ENCODE measurements at regions of chr15 and their contacts with region 1.

Region 1: DNA sequence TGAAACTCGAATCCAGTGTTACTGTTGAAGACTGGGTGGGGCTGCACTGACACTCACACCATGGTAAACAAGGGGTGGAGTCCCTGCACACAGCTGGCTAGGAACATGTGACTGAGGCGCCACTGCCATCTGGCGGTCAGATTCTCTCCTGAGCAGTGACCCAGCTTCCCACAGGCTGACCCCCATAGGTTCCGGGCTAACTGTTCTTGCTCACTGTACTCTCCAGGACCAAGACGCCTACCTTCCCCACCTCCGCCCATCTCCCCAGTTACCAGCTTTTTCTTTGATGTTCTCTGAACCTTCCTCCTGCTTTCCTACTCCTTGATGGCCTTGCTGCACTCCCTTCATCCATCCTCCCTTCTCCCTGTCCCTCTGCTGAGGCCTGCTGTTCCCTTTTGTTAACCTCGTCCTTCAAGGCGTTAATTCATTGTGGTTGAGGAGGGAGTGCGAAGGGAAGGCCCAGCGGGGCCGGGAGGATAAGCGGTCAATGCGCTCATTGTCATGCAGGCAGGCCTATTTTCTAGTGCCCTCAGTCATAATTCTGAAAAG is 115.2 kb downstream of the ATP8B4 start:
- DNase-seq: peak; percentile 37
- ATAC-seq: peak; percentile 100
- H3K4me3 ChIP-seq: no peak overlapping the region
- H3K27ac ChIP-seq: no peak overlapping the region
- H3K4me1 ChIP-seq: no peaks in the 10 kb centered on the region
- H3K27me3 ChIP-seq: no peaks in the 10 kb centered on the region; a peak in 2 of 4 replicates
- CTCF ChIP-seq: peak; percentile 71 to 80 (median 79)
- EP300 ChIP-seq: no peak
- POLR2A ChIP-seq: no peak
- RAD21 ChIP-seq: peak; percentile 70

Region 2: DNA sequence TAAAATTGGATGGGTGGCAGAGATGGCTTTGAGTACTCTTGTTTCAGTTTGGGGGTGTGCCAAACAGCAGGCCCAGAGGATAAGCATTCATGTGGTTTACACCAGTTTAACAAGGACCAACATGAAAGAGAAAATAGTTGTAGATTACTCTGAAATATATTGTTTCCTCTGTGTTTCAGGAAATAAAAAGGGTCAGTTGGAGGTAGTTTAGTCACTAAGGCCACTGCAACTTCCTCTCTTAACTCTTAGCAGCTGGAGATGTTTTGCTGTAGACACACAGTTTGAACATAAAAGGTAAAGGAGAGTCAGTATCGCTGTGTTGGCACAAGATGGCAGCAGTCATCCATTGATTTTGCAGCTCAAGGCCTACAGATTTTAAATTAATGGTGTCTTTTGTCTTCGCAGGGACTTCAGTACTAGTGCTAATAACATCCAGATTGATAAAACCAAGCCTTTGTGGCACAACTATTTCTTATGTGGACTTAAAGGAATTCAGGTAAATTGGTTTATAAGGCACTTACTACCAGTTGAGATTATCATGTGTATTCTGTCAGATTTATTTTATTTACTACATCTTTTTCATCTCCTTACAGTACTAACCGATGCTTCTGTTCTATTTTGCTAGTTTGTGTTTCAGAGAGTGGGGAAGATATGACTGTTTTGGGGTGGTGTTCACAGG is 768.3 kb before region 1 on chr15:
- CTCF ChIA-PET with region 1: interaction called, 30 read pairs
- POLR2A ChIA-PET with region 1: no interaction called
- RAD21 ChIA-PET with region 1: interaction called, 34 read pairs
- SMC1A ChIA-PET with region 1: interaction called, 21 read pairs
- in situ Hi-C with region 1: no loop called
- intact Hi-C with region 1: loop called (anchors 1 kb)
- DNase-seq: peak; percentile 56
- ATAC-seq: peak; percentile 95
- H3K4me3 ChIP-seq: no peak overlapping the region
- H3K27ac ChIP-seq: no peak overlapping the region
- H3K4me1 ChIP-seq: peaks cover 7% of the 10 kb centered on the region; the same call in 1 of the 2 replicates
- H3K27me3 ChIP-seq: no peaks in the 10 kb centered on the region
- CTCF ChIP-seq: peak; percentile 68 to 85 (median 82)
- EP300 ChIP-seq: no peak
- POLR2A ChIP-seq: no peak
- RAD21 ChIP-seq: peak; percentile 84

Region 3: DNA sequence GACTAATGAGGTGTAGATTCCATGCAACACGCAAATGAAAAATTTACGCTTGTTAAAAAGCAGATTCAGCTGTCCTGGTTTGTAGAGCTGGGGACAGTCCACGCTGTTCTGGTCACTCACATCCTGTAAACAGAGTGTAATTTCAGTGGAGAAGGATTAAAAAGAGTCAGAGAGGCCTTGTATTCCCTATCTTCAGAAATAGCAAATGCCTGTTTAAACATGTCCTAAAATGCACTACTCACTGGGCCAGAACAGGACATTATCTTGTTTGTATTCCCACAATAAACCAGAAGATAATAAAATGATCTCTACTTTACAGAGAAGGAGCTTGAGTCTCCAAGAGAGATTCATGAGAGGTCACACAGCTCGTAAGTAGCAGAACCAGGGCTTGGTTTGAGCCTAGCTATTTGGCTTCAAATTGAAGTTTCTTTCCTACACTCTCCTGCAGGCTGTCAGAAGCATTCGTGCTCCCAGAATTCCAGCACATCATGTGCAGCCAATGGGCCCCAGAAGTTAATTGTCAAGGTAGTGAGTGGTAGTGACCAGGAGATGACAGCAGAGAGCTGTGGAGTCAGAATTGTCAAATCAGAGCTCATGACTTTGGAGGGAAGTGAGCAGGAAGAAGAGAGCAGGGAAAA is 127.3 kb before region 1 on chr15:
- CTCF ChIA-PET with region 1: interaction called, 61 read pairs
- POLR2A ChIA-PET with region 1: no interaction called
- RAD21 ChIA-PET with region 1: interaction called, 40 read pairs
- SMC1A ChIA-PET with region 1: interaction called, 34 read pairs
- in situ Hi-C with region 1: no loop called
- intact Hi-C with region 1: no loop called
- DNase-seq: no peak
- ATAC-seq: no peak
- H3K4me3 ChIP-seq: no peak overlapping the region
- H3K27ac ChIP-seq: no peak overlapping the region
- H3K4me1 ChIP-seq: no peaks in the 10 kb centered on the region
- H3K27me3 ChIP-seq: no peaks in the 10 kb centered on the region
- CTCF ChIP-seq: peak; percentile 28 to 39 (median 37); a peak in 4 of 6 replicates
- EP300 ChIP-seq: no peak
- POLR2A ChIP-seq: no peak
- RAD21 ChIP-seq: peak; percentile 58

Region 4: DNA sequence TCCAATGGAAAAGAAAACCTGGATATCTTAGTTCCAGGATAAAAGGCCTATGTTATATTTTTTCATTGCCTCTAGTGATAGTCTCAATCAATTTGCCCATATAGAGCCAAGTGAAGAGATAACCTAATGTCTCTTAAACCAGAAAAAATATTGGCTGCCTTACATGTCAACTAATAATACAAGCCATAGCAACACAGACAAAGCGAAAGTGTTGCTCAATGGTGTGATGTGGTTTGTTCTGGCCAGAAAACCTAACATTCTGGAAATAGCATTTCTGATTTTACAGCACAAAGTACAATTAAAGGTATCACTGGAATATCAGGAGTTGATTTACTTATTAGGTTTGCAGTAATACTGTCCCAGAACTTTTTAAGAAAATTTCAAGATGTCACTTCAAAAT is 13.7 kb after region 1 on chr15:
- CTCF ChIA-PET with region 1: interaction called, 14 read pairs
- POLR2A ChIA-PET with region 1: interaction called, 4 read pairs
- RAD21 ChIA-PET with region 1: interaction called, 7 read pairs
- SMC1A ChIA-PET with region 1: interaction called, 29 read pairs
- in situ Hi-C with region 1: no loop called
- intact Hi-C with region 1: no loop called
- DNase-seq: no peak
- ATAC-seq: no peak
- H3K4me3 ChIP-seq: no peak overlapping the region
- H3K27ac ChIP-seq: no peak overlapping the region
- H3K4me1 ChIP-seq: no peaks in the 10 kb centered on the region
- H3K27me3 ChIP-seq: no peaks in the 10 kb centered on the region; a peak in 1 of 4 replicates
- CTCF ChIP-seq: no peak
- EP300 ChIP-seq: no peak
- POLR2A ChIP-seq: no peak
- RAD21 ChIP-seq: no peak

Region 5: DNA sequence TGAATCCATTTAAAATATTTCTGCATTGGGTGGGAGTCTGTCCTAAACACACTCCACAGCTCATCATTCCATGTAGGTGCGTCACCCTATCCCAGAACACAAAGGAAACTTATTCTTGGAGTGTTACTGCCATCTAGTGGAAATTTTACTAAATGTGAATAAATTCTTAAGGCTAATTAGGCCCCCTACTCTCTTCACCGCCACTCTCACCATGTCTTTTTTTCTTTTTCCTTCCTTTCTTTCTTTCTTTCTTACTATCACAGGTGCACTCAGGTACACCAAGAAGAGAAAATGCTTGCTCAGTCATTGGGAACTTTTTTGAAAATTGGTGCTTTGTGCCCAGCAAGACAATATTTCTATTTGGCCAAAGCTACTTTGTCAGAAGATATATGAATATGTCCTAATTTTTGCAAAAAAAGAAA is 141.6 kb after region 1 on chr15:
- CTCF ChIA-PET with region 1: interaction called, 9 read pairs
- POLR2A ChIA-PET with region 1: no interaction called
- RAD21 ChIA-PET with region 1: interaction called, 6 read pairs
- SMC1A ChIA-PET with region 1: interaction called, 6 read pairs
- in situ Hi-C with region 1: no loop called
- intact Hi-C with region 1: loop called (anchors 5 kb)
- DNase-seq: peak; percentile 16
- ATAC-seq: peak; percentile 75
- H3K4me3 ChIP-seq: no peak overlapping the region
- H3K27ac ChIP-seq: no peak overlapping the region
- H3K4me1 ChIP-seq: no peaks in the 10 kb centered on the region
- H3K27me3 ChIP-seq: no peaks in the 10 kb centered on the region; a peak in 1 of 4 replicates
- CTCF ChIP-seq: peak; percentile 25 to 47 (median 31); a peak in 4 of 6 replicates
- EP300 ChIP-seq: no peak
- POLR2A ChIP-seq: no peak
- RAD21 ChIP-seq: peak; percentile 66

Measured in GM12878 (cell line).